CD4-positive, alpha-beta T cell (primary cell): ENCODE measurements at regions of chr6 and their contacts with region 1.

Region 1: DNA sequence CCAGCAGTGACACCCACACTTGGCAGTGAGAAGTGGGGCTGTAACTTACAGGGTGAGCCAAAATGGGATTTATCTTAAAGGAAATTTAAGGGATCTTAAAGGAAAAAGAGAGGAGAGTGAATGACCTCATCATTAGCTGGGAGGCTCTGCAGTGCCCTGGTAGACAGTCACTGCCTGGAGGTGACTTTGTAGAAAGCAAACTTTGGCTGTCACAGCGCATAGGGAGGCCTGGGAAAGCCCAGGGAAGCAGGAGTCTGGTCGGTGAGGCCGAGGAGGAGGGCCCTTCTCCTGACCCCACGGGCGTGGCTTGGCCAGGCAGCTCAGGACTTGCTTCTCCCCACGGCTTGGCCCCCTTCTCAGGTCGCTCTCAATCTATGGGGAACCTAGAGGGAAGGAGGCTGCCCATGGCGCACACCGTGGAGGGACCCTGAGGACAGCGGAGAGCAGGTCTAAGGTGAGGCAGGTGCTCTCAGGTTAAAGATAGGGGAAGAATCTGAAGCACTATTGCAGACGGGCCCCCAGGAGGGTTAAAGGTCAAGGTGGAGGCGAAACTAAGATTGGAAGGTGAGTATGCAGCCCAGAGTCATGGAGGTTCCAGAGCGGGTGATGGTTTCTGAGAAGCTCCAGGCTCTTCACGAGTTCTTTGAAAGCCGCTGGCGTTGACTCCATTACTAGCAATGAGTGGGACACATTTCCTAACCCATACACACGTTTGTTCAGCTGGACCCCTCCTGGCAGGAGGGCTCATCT is 15.6 kb upstream of the RIPK1 start:
- DNase-seq: no peak
- ATAC-seq: no peak
- H3K4me3 ChIP-seq: peak overlapping the region; percentile 64
- H3K4me3 Mint-ChIP-seq: peak overlapping the region; percentile 79
- H3K27ac ChIP-seq: no peak overlapping the region
- H3K27ac Mint-ChIP-seq: peak overlapping the region; percentile 58
- H3K4me1 ChIP-seq: peaks cover 21% of the 10 kb centered on the region
- H3K4me1 Mint-ChIP-seq: peaks cover 23% of the 10 kb centered on the region
- H3K27me3 ChIP-seq: no peaks in the 10 kb centered on the region
- H3K27me3 Mint-ChIP-seq: no peaks in the 10 kb centered on the region
- CTCF ChIP-seq: no peak

Region 2: DNA sequence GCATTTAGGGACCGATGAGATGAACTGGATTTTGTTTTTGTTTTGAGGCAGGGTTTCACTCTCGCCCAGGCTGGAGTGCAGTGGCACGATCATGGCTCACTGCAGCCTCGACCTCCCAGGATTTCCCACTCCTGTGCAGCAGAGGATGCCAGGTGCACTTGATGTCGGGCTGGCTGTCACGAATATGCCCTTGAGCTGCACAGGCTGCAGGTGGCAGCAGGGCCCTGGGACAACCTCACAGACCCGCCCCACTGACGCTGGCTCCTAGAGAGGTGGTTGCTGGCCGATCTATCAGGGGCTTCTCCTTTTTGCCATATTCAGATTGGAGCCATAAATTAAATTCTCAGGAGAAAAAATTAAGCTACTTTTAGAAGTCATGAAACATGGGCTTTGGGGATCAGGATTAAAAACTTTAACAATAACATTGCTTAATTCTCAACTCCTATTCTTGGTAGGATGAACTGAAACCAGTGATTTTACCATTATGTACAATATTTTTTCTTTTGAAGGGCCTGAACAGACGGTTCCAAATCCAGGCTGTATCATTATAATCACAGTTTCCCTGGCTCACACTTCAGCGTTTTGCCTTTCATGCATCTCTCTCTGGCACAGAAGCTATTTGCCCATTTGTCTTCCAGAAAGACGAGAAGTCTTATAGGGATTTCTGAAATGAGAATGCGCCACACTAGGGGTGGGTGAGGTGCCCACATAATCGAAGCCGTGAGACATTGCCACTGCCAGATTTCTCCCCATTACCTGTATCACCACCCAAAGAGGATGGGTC is 20.6 kb before region 1 on chr6:
- CTCF ChIA-PET with region 1: interaction called, 4 read pairs
- POLR2A ChIA-PET with region 1: interaction called, 57 read pairs
- intact Hi-C with region 1: loop called (anchors 2 kb)
- DNase-seq: peak in 7 of 14 experiments; percentile 23 to 56 (median 43)
- ATAC-seq: peak; percentile 75
- H3K4me3 ChIP-seq: no peak overlapping the region
- H3K4me3 Mint-ChIP-seq: no peak overlapping the region
- H3K27ac ChIP-seq: no peak overlapping the region
- H3K27ac Mint-ChIP-seq: no peak overlapping the region
- H3K4me1 ChIP-seq: peaks cover 15% of the 10 kb centered on the region
- H3K4me1 Mint-ChIP-seq: peaks cover 27% of the 10 kb centered on the region
- H3K27me3 ChIP-seq: no peaks in the 10 kb centered on the region
- H3K27me3 Mint-ChIP-seq: peaks cover 10% of the 10 kb centered on the region
- CTCF ChIP-seq: no peak

Region 3: DNA sequence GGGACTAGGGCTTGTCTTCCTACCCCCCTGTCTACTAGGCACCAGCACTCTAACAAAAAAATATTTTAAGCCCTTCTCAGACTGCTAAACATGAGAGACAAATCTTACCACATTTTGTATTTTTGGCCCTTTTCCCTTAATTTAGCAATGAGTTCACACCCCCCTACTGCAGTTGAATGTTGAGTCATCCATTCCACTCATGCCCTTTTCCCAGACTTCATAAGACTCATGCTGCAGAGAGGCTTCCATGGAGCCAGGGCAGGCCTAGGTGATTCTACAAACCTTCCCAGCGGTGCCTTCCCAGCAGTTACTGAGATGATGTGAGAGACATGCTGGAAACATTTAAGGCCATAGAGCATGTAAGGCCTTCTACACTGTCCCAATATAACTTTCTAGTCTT is 645.0 kb after region 1 on chr6:
- CTCF ChIA-PET with region 1: no interaction called
- POLR2A ChIA-PET with region 1: no interaction called
- intact Hi-C with region 1: no loop called
- DNase-seq: no peak
- ATAC-seq: no peak
- H3K4me3 ChIP-seq: no peak overlapping the region
- H3K4me3 Mint-ChIP-seq: no peak overlapping the region
- H3K27ac ChIP-seq: no peak overlapping the region
- H3K27ac Mint-ChIP-seq: no peak overlapping the region
- H3K4me1 ChIP-seq: no peaks in the 10 kb centered on the region
- H3K4me1 Mint-ChIP-seq: no peaks in the 10 kb centered on the region
- H3K27me3 ChIP-seq: no peaks in the 10 kb centered on the region
- H3K27me3 Mint-ChIP-seq: peaks cover 19% of the 10 kb centered on the region
- CTCF ChIP-seq: no peak

Region 4: DNA sequence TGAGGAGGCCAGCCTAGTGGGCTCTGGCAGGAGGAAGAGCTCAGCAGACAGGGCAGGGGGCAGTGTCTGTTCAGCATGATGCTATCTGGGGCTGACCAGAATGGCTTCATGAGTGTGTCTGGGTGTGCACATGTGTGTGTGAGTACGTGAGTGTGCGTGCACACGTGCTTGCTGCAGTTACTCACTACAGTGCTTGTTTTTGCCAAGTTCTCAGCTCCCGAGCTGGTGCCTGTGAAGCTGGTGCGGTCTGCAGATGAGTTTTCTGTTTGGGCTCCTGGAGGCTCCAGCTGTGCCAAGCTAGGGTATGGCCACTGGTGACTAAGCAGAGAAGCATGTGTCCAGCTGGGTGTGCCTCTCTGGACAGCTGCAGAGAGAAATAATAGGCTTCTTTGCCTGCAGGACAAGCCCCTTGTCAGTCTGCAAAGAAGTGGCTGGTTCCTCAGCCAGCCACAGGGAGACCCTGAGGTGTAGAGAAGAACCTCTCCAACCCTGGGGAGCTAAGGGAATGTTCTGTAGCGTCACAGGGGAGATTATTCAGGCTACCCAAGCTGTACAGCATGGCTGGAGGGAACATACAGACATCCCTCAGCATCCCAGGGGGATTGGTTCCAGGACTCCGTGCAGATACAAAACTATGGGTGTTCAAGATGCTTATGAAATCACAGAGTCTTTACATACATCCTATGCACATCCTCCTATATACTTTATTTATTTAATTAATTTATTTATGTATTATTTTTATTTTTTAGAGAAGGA is 756.3 kb after region 1 on chr6:
- CTCF ChIA-PET with region 1: no interaction called
- POLR2A ChIA-PET with region 1: no interaction called
- intact Hi-C with region 1: no loop called
- DNase-seq: no peak
- ATAC-seq: no peak
- H3K4me3 ChIP-seq: no peak overlapping the region
- H3K4me3 Mint-ChIP-seq: no peak overlapping the region
- H3K27ac ChIP-seq: no peak overlapping the region
- H3K27ac Mint-ChIP-seq: no peak overlapping the region
- H3K4me1 ChIP-seq: no peaks in the 10 kb centered on the region
- H3K4me1 Mint-ChIP-seq: no peaks in the 10 kb centered on the region
- H3K27me3 ChIP-seq: peaks cover 0 to 3% of the 10 kb centered on the region in 2 experiments
- H3K27me3 Mint-ChIP-seq: peaks cover 4% of the 10 kb centered on the region
- CTCF ChIP-seq: no peak